ENCODE measurements at regions of chr16 and their contacts with region 1.

Region 1: GRCh38 chr16:24499193-24499814 is 40.1 kb upstream of the RBBP6 start:
- DNase-seq: peak; percentile 13
- H3K4me3 ChIP-seq: no peak overlapping the region
- H3K27ac ChIP-seq: no peak overlapping the region
- H3K4me1 ChIP-seq: no peaks in the 10 kb centered on the region
- H3K27me3 ChIP-seq: no peaks in the 10 kb centered on the region
- CTCF ChIP-seq: peak; percentile 39 to 42
- POLR2A ChIP-seq: no peak

Region 2: GRCh38 chr16:24041826-24042631 is 457.3 kb before region 1 on chr16:
- CTCF ChIA-PET with region 1: interaction called, 170 read pairs
- POLR2A ChIA-PET with region 1: no interaction called
- dilution Hi-C with region 1: no loop called
- intact Hi-C with region 1: loop called (anchors 1 kb)
- DNase-seq: peak; percentile 53
- H3K4me3 ChIP-seq: no peak overlapping the region
- H3K27ac ChIP-seq: no peak overlapping the region
- H3K4me1 ChIP-seq: no peaks in the 10 kb centered on the region
- H3K27me3 ChIP-seq: no peaks in the 10 kb centered on the region
- CTCF ChIP-seq: peak; percentile 71 to 77
- POLR2A ChIP-seq: no peak

Region 3: DNA sequence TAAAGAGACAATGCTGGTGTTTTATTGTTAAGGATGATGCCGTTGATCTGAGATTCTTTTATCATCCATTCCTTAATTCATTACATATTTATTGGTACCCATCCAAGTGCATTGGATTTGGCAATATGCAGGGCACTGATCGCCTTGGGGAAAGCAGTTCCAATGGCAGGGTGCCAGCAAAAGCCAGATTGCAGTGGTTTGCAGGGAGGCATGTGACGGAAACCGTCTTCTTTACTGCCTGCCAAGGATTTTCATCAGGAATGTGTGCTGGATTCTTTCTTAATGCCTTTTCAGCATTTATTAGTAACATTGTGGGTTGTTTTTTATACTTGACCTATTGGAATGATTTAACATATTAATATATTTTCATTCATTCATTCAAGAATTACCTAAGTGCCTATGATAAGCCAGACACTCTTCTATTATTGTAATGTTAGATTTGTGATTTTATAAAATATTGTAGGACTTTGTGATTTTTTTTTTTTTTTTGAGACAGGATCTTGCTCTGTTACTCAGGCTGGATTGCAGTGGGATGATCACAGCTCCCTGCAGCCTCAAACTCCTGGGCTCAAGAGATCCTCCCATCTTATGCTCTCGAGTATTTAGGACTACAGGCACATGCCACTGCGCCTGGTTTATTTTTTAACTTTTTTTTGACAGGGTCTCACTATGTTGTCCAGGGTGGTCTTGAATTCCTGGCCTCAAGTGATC is 136.8 kb after region 1 on chr16:
- CTCF ChIA-PET with region 1: no interaction called
- POLR2A ChIA-PET with region 1: no interaction called
- dilution Hi-C with region 1: no loop called
- intact Hi-C with region 1: no loop called
- DNase-seq: peak; percentile 77
- H3K4me3 ChIP-seq: no peak overlapping the region
- H3K27ac ChIP-seq: no peak overlapping the region
- H3K4me1 ChIP-seq: peaks cover 7% of the 10 kb centered on the region
- H3K27me3 ChIP-seq: no peaks in the 10 kb centered on the region
- CTCF ChIP-seq: no peak
- POLR2A ChIP-seq: no peak

Measured in endothelial cell of umbilical vein (primary cell).